IMR-90 (cell line): ENCODE measurements at regions of chr2 and their contacts with region 1.

Region 1: DNA sequence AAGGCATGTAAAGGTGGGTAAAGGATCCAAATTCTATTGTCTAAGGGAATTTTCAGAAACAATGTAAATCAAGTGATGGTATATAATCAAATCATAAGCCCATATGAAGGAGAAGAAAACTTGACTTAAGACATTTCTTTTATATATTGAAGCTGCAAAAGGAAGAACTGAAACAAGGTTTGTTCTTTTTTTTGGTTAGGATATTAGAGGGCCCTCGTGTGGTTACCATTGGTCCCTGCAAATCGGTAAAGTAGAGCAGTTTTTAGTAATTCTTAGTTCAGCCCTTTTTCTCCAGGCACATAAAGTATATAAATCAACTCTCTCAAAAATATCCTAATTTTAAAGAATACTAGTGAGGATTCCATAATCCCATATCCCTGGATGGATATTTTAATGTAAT is 105.6 kb upstream of the STK17B start:
- DNase-seq: peak; percentile 64
- ATAC-seq: no peak
- H3K4me3 ChIP-seq: no peak overlapping the region
- H3K27ac ChIP-seq: no peak overlapping the region
- H3K4me1 ChIP-seq: peaks cover 21% of the 10 kb centered on the region
- H3K27me3 ChIP-seq: no peaks in the 10 kb centered on the region
- CTCF ChIP-seq: peak; percentile 69
- POLR2A ChIP-seq: no peak
- RAD21 ChIP-seq: peak; percentile 68

Region 2: GRCh38 chr2:195961873-195962272 is 315.1 kb before region 1 on chr2:
- CTCF ChIA-PET with region 1: no interaction called
- POLR2A ChIA-PET with region 1: no interaction called
- dilution Hi-C with region 1: no loop called
- in situ Hi-C with region 1: no loop called
- intact Hi-C with region 1: no loop called
- DNase-seq: no peak
- ATAC-seq: no peak
- H3K4me3 ChIP-seq: no peak overlapping the region
- H3K27ac ChIP-seq: no peak overlapping the region
- H3K4me1 ChIP-seq: no peaks in the 10 kb centered on the region
- H3K27me3 ChIP-seq: no peaks in the 10 kb centered on the region; the same call in 1 of the 2 replicates
- CTCF ChIP-seq: no peak
- POLR2A ChIP-seq: no peak
- RAD21 ChIP-seq: no peak

Region 3: GRCh38 chr2:196681512-196681911 is 404.5 kb after region 1 on chr2:
- CTCF ChIA-PET with region 1: no interaction called
- POLR2A ChIA-PET with region 1: interaction called, 11 read pairs
- dilution Hi-C with region 1: no loop called
- in situ Hi-C with region 1: no loop called
- intact Hi-C with region 1: no loop called
- DNase-seq: no peak
- ATAC-seq: no peak
- H3K4me3 ChIP-seq: no peak overlapping the region
- H3K27ac ChIP-seq: no peak overlapping the region
- H3K4me1 ChIP-seq: no peaks in the 10 kb centered on the region
- H3K27me3 ChIP-seq: no peaks in the 10 kb centered on the region
- CTCF ChIP-seq: no peak
- POLR2A ChIP-seq: no peak
- RAD21 ChIP-seq: no peak